Sciatic nerve (tissue), 2 donors: ENCODE measurements at regions of chrX and their contacts with region 1.

Region 1: DNA sequence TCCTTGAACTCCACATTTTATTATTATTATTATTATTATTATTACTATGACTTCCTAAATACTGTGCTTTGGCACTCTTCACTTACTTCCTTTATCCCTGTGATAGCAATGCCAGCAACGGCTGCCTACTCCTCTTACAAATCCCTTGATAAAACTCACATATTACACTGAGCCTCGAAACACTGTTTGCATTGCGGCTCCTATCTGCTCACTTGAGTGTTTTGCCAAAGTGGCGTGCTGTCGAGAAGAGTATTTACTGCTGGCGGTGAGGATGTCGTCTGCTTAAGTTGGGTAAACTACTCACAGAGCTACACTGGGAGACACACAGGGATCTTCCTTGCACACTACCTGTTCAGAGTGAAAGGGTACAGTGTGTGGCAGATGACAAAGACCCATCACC is 143.4 kb upstream of the VCX3A start:
- DNase-seq: no peak
- ATAC-seq: no peak

Region 2: GRCh38 chrX:7574325-7574724 is 896.0 kb after region 1 on chrX:
- intact Hi-C with region 1: loop called (anchors 5 kb)
- DNase-seq: no peak
- ATAC-seq: no peak